Naive thymus-derived CD4-positive, alpha-beta T cell (primary cell): ENCODE measurements at regions of chr2 and their contacts with region 1.

Region 1: DNA sequence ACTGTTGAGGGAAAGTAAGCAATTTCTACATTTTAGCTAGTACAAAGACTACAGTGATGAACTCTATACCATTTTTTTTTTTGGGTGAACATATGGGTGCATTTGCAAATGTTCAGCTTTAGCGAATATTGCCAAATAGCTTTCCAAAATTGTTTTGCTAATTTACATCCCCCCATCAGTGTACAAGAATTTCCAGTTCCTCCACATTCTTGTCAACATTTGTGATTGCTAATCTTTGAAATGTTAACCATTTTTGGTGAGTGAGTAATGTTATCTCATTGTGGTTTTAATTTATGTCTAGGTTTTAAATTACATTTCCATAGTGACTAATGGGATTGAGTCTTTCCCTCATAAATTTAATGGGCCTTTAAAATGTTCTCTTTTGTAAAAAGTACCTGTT is 16.4 kb upstream of the CNRIP1 start:
- DNase-seq: no peak
- ATAC-seq: no peak
- H3K4me3 ChIP-seq: no peak overlapping the region
- H3K4me3 Mint-ChIP-seq: no peak overlapping the region
- H3K27ac ChIP-seq: no peak overlapping the region
- H3K27ac Mint-ChIP-seq: no peak overlapping the region
- H3K4me1 ChIP-seq: no peaks in the 10 kb centered on the region
- H3K4me1 Mint-ChIP-seq: no peaks in the 10 kb centered on the region
- H3K27me3 ChIP-seq: no peaks in the 10 kb centered on the region
- H3K27me3 Mint-ChIP-seq: peaks cover 19 to 46% (median 26%) of the 10 kb centered on the region in 5 donors

Region 2: DNA sequence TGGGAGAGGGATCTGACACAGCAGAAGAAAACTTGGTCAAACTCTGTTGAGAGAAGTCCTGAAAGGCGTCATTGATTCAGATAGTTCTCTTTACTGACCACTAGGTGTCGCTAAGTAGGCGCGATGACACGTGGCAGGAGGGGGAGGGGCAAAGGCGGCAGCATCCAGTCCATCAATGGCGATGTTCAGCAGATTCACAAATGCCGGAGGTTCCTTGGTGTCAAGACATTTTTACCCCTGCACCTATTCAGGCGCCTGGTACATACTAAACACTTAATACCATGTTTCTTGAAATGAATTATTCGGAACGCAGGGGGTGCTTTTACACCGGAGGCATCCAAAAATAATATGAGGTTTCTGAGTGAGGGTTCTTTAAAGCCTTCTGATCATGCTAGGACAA is 25.9 kb after region 1 on chr2:
- CTCF ChIA-PET with region 1: no interaction called
- POLR2A ChIA-PET with region 1: no interaction called
- intact Hi-C with region 1: loop called in 1 of 2 experiments (anchors 1 kb)
- DNase-seq: peak; percentile 62 to 81 (median 76)
- ATAC-seq: peak; percentile 87
- H3K4me3 ChIP-seq: peak overlapping the region; percentile 37
- H3K4me3 Mint-ChIP-seq: peak overlapping the region in 9 of 10 donors; percentile 21 to 87 (median 74)
- H3K27ac ChIP-seq: no peak overlapping the region
- H3K27ac Mint-ChIP-seq: peak overlapping the region in 6 of 9 donors; percentile 10 to 81 (median 18)
- H3K4me1 ChIP-seq: peaks cover 0 to 20% of the 10 kb centered on the region in 2 donors
- H3K4me1 Mint-ChIP-seq: peaks cover 6 to 19% (median 10%) of the 10 kb centered on the region in 7 donors
- H3K27me3 ChIP-seq: no peaks in the 10 kb centered on the region
- H3K27me3 Mint-ChIP-seq: peaks cover 0 to 23% (median 0%) of the 10 kb centered on the region in 5 donors